CD4-positive, alpha-beta T cell (primary cell): ENCODE measurements at regions of chr4 and their contacts with region 1.

Region 1: GRCh38 chr4:73653695-73654106 is 33.5 kb upstream of the RASSF6 start:
- DNase-seq: peak in 4 of 14 experiments; percentile 10 to 65 (median 36)
- ATAC-seq: peak; percentile 63
- H3K4me3 ChIP-seq: no peak overlapping the region
- H3K4me3 Mint-ChIP-seq: no peak overlapping the region
- H3K27ac ChIP-seq: no peak overlapping the region
- H3K27ac Mint-ChIP-seq: no peak overlapping the region
- H3K4me1 ChIP-seq: no peaks in the 10 kb centered on the region
- H3K4me1 Mint-ChIP-seq: no peaks in the 10 kb centered on the region
- H3K27me3 ChIP-seq: no peaks in the 10 kb centered on the region
- H3K27me3 Mint-ChIP-seq: peaks cover 6% of the 10 kb centered on the region
- CTCF ChIP-seq: peak; percentile 76

Region 2: GRCh38 chr4:72295966-72296557 is 1357.6 kb before region 1 on chr4:
- CTCF ChIA-PET with region 1: no interaction called
- POLR2A ChIA-PET with region 1: no interaction called
- intact Hi-C with region 1: loop called in 1 of 2 experiments (anchors 10 kb)
- DNase-seq: peak in 2 of 14 experiments; percentile 1 to 11
- ATAC-seq: no peak
- H3K4me3 ChIP-seq: no peak overlapping the region
- H3K4me3 Mint-ChIP-seq: no peak overlapping the region
- H3K27ac ChIP-seq: no peak overlapping the region
- H3K27ac Mint-ChIP-seq: no peak overlapping the region
- H3K4me1 ChIP-seq: no peaks in the 10 kb centered on the region
- H3K4me1 Mint-ChIP-seq: no peaks in the 10 kb centered on the region
- H3K27me3 ChIP-seq: no peaks in the 10 kb centered on the region
- H3K27me3 Mint-ChIP-seq: peaks cover 7% of the 10 kb centered on the region
- CTCF ChIP-seq: peak; percentile 21

Region 3: DNA sequence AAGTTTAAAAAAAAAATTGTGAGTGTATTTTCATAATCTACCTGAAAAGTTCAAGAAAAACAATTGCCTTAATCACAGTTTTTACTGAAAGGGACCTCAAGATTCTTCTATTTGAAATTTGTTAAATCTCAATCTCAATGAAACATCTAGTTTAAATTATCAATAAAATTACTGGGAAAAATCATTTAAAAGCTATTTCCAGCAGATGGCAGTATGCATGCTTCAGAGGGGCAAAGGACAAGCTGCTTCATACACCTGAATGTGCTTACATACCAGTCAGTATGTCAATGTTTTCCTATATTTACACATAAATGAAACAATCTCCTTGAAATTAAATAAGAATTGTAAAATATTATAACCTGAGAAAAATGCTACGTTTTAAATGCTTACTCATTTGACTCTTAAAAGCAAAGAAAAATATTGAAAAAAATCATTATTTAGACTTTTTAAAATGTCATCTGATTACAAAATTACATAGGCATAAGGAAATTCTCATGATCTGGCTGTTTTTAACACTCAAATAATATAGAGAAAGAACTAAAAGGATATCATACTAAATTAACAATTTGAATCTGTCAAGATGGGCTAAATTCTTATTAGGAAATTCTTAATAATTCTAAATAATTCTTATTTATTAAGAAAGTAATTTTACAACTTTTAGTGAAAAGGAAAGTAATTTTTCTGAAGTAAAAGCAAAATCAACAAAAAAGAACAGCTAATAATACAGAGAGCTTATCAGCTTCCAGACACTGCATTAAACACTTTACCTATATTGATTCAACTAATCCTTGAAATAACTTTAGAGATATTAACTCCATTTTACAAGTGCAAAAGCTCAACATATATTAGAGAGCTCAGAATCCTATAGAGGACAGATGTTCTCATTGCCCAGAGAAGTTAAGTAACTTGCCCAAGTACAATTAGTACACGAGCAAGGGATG is 1326.7 kb before region 1 on chr4:
- CTCF ChIA-PET with region 1: no interaction called
- POLR2A ChIA-PET with region 1: no interaction called
- intact Hi-C with region 1: loop called in 1 of 2 experiments (anchors 10 kb)
- DNase-seq: peak in 3 of 14 experiments; percentile 9 to 14 (median 12)
- ATAC-seq: no peak
- H3K4me3 ChIP-seq: no peak overlapping the region
- H3K4me3 Mint-ChIP-seq: no peak overlapping the region
- H3K27ac ChIP-seq: no peak overlapping the region
- H3K27ac Mint-ChIP-seq: no peak overlapping the region
- H3K4me1 ChIP-seq: no peaks in the 10 kb centered on the region
- H3K4me1 Mint-ChIP-seq: no peaks in the 10 kb centered on the region
- H3K27me3 ChIP-seq: peaks cover 0 to 3% of the 10 kb centered on the region in 2 experiments
- H3K27me3 Mint-ChIP-seq: peaks cover 17% of the 10 kb centered on the region
- CTCF ChIP-seq: peak; percentile 48

Region 4: GRCh38 chr4:72701987-72702819 is 951.5 kb before region 1 on chr4:
- CTCF ChIA-PET with region 1: no interaction called
- POLR2A ChIA-PET with region 1: no interaction called
- intact Hi-C with region 1: loop called in 1 of 2 experiments (anchors 5 kb)
- DNase-seq: peak in 5 of 14 experiments; percentile 1 to 52 (median 50)
- ATAC-seq: no peak
- H3K4me3 ChIP-seq: peak overlapping the region; percentile 40
- H3K4me3 Mint-ChIP-seq: peak overlapping the region; percentile 83
- H3K27ac ChIP-seq: no peak overlapping the region
- H3K27ac Mint-ChIP-seq: no peak overlapping the region
- H3K4me1 ChIP-seq: no peaks in the 10 kb centered on the region
- H3K4me1 Mint-ChIP-seq: no peaks in the 10 kb centered on the region
- H3K27me3 ChIP-seq: no peaks in the 10 kb centered on the region
- H3K27me3 Mint-ChIP-seq: peaks cover 2% of the 10 kb centered on the region
- CTCF ChIP-seq: peak; percentile 50

Region 5: GRCh38 chr4:73311428-73311827 is 342.3 kb before region 1 on chr4:
- CTCF ChIA-PET with region 1: interaction called, 4 read pairs
- POLR2A ChIA-PET with region 1: no interaction called
- intact Hi-C with region 1: loop called (anchors 5 kb)
- DNase-seq: peak in 2 of 14 experiments; percentile 2 to 5
- ATAC-seq: no peak
- H3K4me3 ChIP-seq: no peak overlapping the region
- H3K4me3 Mint-ChIP-seq: no peak overlapping the region
- H3K27ac ChIP-seq: no peak overlapping the region
- H3K27ac Mint-ChIP-seq: no peak overlapping the region
- H3K4me1 ChIP-seq: no peaks in the 10 kb centered on the region
- H3K4me1 Mint-ChIP-seq: no peaks in the 10 kb centered on the region
- H3K27me3 ChIP-seq: no peaks in the 10 kb centered on the region
- H3K27me3 Mint-ChIP-seq: no peaks in the 10 kb centered on the region
- CTCF ChIP-seq: peak; percentile 61

Region 6: GRCh38 chr4:73573794-73574406 is 79.8 kb before region 1 on chr4:
- CTCF ChIA-PET with region 1: no interaction called
- POLR2A ChIA-PET with region 1: no interaction called
- intact Hi-C with region 1: no loop called
- DNase-seq: peak in 5 of 14 experiments; percentile 1 to 38 (median 16)
- ATAC-seq: no peak
- H3K4me3 ChIP-seq: no peak overlapping the region
- H3K4me3 Mint-ChIP-seq: no peak overlapping the region
- H3K27ac ChIP-seq: no peak overlapping the region
- H3K27ac Mint-ChIP-seq: no peak overlapping the region
- H3K4me1 ChIP-seq: no peaks in the 10 kb centered on the region
- H3K4me1 Mint-ChIP-seq: no peaks in the 10 kb centered on the region
- H3K27me3 ChIP-seq: no peaks in the 10 kb centered on the region
- H3K27me3 Mint-ChIP-seq: no peaks in the 10 kb centered on the region
- CTCF ChIP-seq: peak; percentile 31

Region 7: GRCh38 chr4:73593631-73594241 is 60.0 kb before region 1 on chr4:
- CTCF ChIA-PET with region 1: no interaction called
- POLR2A ChIA-PET with region 1: no interaction called
- intact Hi-C with region 1: loop called (anchors 1 to 5 kb)
- DNase-seq: peak in 3 of 14 experiments; percentile 6 to 23 (median 20)
- ATAC-seq: no peak
- H3K4me3 ChIP-seq: no peak overlapping the region
- H3K4me3 Mint-ChIP-seq: no peak overlapping the region
- H3K27ac ChIP-seq: no peak overlapping the region
- H3K27ac Mint-ChIP-seq: no peak overlapping the region
- H3K4me1 ChIP-seq: no peaks in the 10 kb centered on the region
- H3K4me1 Mint-ChIP-seq: no peaks in the 10 kb centered on the region
- H3K27me3 ChIP-seq: no peaks in the 10 kb centered on the region
- H3K27me3 Mint-ChIP-seq: no peaks in the 10 kb centered on the region
- CTCF ChIP-seq: peak; percentile 45

Region 8: DNA sequence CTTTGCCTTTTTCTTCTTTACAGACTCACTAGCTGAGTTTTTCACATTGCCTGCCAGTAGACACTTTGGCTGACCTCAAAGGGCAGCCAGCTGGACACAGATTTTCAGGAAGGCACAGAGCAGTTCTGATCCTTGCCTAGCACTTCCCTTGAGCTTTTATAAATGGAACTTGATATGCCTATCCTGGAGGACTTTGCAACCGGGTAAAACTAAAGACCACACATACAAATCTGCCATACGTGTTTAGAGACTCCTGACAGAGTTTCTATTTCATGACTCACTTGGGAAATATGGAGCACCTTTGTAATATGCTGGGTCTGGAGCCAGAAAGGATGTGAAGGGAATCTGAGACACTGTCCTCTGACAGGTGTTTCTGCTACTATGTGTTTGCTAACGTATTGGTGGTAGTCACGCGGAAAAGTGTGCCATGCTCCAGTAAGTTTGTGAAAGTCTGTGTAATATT is 23.2 kb after region 1 on chr4:
- CTCF ChIA-PET with region 1: no interaction called
- POLR2A ChIA-PET with region 1: no interaction called
- intact Hi-C with region 1: no loop called
- DNase-seq: no peak
- ATAC-seq: no peak
- H3K4me3 ChIP-seq: no peak overlapping the region
- H3K4me3 Mint-ChIP-seq: no peak overlapping the region
- H3K27ac ChIP-seq: no peak overlapping the region
- H3K27ac Mint-ChIP-seq: no peak overlapping the region
- H3K4me1 ChIP-seq: no peaks in the 10 kb centered on the region
- H3K4me1 Mint-ChIP-seq: no peaks in the 10 kb centered on the region
- H3K27me3 ChIP-seq: no peaks in the 10 kb centered on the region
- H3K27me3 Mint-ChIP-seq: no peaks in the 10 kb centered on the region
- CTCF ChIP-seq: no peak

Region 9: GRCh38 chr4:74370912-74371311 is 717.2 kb after region 1 on chr4:
- CTCF ChIA-PET with region 1: no interaction called
- POLR2A ChIA-PET with region 1: no interaction called
- intact Hi-C with region 1: no loop called
- DNase-seq: peak in 5 of 14 experiments; percentile 3 to 65 (median 33)
- ATAC-seq: peak; percentile 68
- H3K4me3 ChIP-seq: no peak overlapping the region
- H3K4me3 Mint-ChIP-seq: no peak overlapping the region
- H3K27ac ChIP-seq: no peak overlapping the region
- H3K27ac Mint-ChIP-seq: no peak overlapping the region
- H3K4me1 ChIP-seq: no peaks in the 10 kb centered on the region
- H3K4me1 Mint-ChIP-seq: no peaks in the 10 kb centered on the region
- H3K27me3 ChIP-seq: peaks cover 4 to 18% of the 10 kb centered on the region in 2 experiments
- H3K27me3 Mint-ChIP-seq: peaks cover 27% of the 10 kb centered on the region
- CTCF ChIP-seq: peak; percentile 36